ENCODE measurements at regions of chr19 and their contacts with region 1.

Region 1: GRCh38 chr19:27974082-27974513 is 1238.9 kb downstream of the UQCRFS1 start:
- DNase-seq: peak; percentile 8
- H3K4me3 ChIP-seq: no peak overlapping the region
- H3K27ac ChIP-seq: no peak overlapping the region
- H3K4me1 ChIP-seq: no peaks in the 10 kb centered on the region; a peak in 1 of 4 replicates
- H3K27me3 ChIP-seq: no peaks in the 10 kb centered on the region; the same call in 1 of the 2 replicates
- CTCF ChIP-seq: peak; percentile 80
- EP300 ChIP-seq: no peak
- RAD21 ChIP-seq: peak; percentile 73

Region 2: DNA sequence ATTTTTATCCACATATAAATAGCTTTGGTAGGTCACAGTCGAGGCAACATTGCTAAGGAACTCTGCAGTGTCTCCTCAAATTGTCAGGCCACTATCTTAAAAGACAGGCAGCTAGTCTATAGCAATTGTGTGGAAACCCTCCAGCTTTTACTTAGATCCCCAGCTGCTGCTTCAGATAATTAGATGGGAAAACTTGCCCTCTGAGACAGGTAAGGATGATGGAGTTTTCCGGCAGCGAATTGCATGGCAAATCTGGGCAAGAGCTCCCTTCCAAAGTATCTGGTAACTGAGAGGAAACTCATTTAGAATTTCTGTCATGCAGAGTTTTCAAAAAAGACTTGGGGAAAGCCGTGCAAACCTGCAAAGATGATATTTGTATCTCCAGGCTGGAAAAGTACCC is 352.6 kb after region 1 on chr19:
- CTCF ChIA-PET with region 1: interaction called, 12 read pairs
- POLR2A ChIA-PET with region 1: no interaction called
- DNase-seq: no peak
- H3K4me3 ChIP-seq: no peak overlapping the region
- H3K27ac ChIP-seq: no peak overlapping the region
- H3K4me1 ChIP-seq: no peaks in the 10 kb centered on the region
- H3K27me3 ChIP-seq: peaks cover 4% of the 10 kb centered on the region
- CTCF ChIP-seq: no peak
- EP300 ChIP-seq: no peak
- RAD21 ChIP-seq: no peak